Activated CD8-positive, alpha-beta memory T cell treated with anti-CD3 and anti-CD28 coated beads, Interleukin-2, amount 10 ng/mL, durations not matched to agents 7 days and 5 days (primary cell): ENCODE measurements at regions of chr11 and their contacts with region 1.

Region 1: GRCh38 chr11:554824-555472 is 5.6 kb downstream of the LMNTD2 start:
- DNase-seq: peak; percentile 82
- ATAC-seq: peak; percentile 83
- H3K4me3 Mint-ChIP-seq: peak overlapping the region; percentile 9
- H3K27ac Mint-ChIP-seq: no peak overlapping the region
- H3K4me1 Mint-ChIP-seq: peaks cover 5% of the 10 kb centered on the region
- H3K27me3 Mint-ChIP-seq: peaks cover 18% of the 10 kb centered on the region

Region 2: GRCh38 chr11:363948-364761 is 190.8 kb before region 1 on chr11:
- CTCF ChIA-PET with region 1: no interaction called
- DNase-seq: peak; percentile 67
- ATAC-seq: peak; percentile 75
- H3K4me3 Mint-ChIP-seq: no peak overlapping the region
- H3K27ac Mint-ChIP-seq: peak overlapping the region; percentile 13
- H3K4me1 Mint-ChIP-seq: peaks cover 13% of the 10 kb centered on the region
- H3K27me3 Mint-ChIP-seq: peaks cover 33% of the 10 kb centered on the region

Region 3: GRCh38 chr11:568306-569157 is 13.6 kb after region 1 on chr11:
- CTCF ChIA-PET with region 1: interaction called, 14 read pairs
- DNase-seq: peak; percentile 96
- ATAC-seq: peak; percentile 94
- H3K4me3 Mint-ChIP-seq: peak overlapping the region; percentile 80
- H3K27ac Mint-ChIP-seq: peak overlapping the region; percentile 75
- H3K4me1 Mint-ChIP-seq: peaks cover 16% of the 10 kb centered on the region
- H3K27me3 Mint-ChIP-seq: peaks cover 5% of the 10 kb centered on the region

Region 4: GRCh38 chr11:695538-696248 is 140.7 kb after region 1 on chr11 and contains the start of gene TMEM80:
- CTCF ChIA-PET with region 1: interaction called, 25 read pairs
- DNase-seq: peak; percentile 99
- ATAC-seq: peak; percentile 81
- H3K4me3 Mint-ChIP-seq: peak within 1 kb of the TSS; percentile 84
- H3K27ac Mint-ChIP-seq: peak within 1 kb of the TSS; percentile 93
- H3K4me1 Mint-ChIP-seq: peaks cover 51% of the 10 kb centered on the region
- H3K27me3 Mint-ChIP-seq: no peaks in the 10 kb centered on the region
- total RNA-seq, gene TMEM80: 23.5 to 26.0 TPM